Naive thymus-derived CD4-positive, alpha-beta T cell (primary cell): ENCODE measurements at regions of chr12 and their contacts with region 1.

Region 1: GRCh38 chr12:6723607-6724396 is at the start of gene COPS7A:
- DNase-seq: peak; percentile 77 to 94 (median 90)
- ATAC-seq: peak; percentile 93
- H3K4me3 ChIP-seq: peak within 1 kb of the TSS; percentile 63
- H3K4me3 Mint-ChIP-seq: peak within 1 kb of the TSS; percentile 80 to 97 (median 92)
- H3K27ac ChIP-seq: peak within 1 kb of the TSS; percentile 75
- H3K27ac Mint-ChIP-seq: peak within 1 kb of the TSS; percentile 90 to 98 (median 96)
- H3K4me1 ChIP-seq: peaks cover 10 to 11% of the 10 kb centered on the region in 2 donors
- H3K4me1 Mint-ChIP-seq: peaks cover 24 to 34% (median 27%) of the 10 kb centered on the region in 7 donors
- H3K27me3 ChIP-seq: no peaks in the 10 kb centered on the region
- H3K27me3 Mint-ChIP-seq: no peaks in the 10 kb centered on the region
- total RNA-seq, gene COPS7A: 21.9 to 38.7 (median 30.1) TPM

Region 2: GRCh38 chr12:6607751-6608591 is 115.8 kb before region 1 on chr12:
- CTCF ChIA-PET with region 1: interaction called, 3 read pairs
- POLR2A ChIA-PET with region 1: interaction called, 6 read pairs
- intact Hi-C with region 1: loop called (anchors 1 kb)
- DNase-seq: peak in 8 of 9 donors; percentile 56 to 81 (median 71)
- ATAC-seq: peak; percentile 49
- H3K4me3 ChIP-seq: no peak overlapping the region
- H3K4me3 Mint-ChIP-seq: no peak overlapping the region
- H3K27ac ChIP-seq: peak overlapping the region; percentile 96
- H3K27ac Mint-ChIP-seq: no peak overlapping the region
- H3K4me1 ChIP-seq: peaks cover 46 to 47% of the 10 kb centered on the region in 2 donors
- H3K4me1 Mint-ChIP-seq: peaks cover 48 to 55% (median 51%) of the 10 kb centered on the region in 7 donors
- H3K27me3 ChIP-seq: no peaks in the 10 kb centered on the region
- H3K27me3 Mint-ChIP-seq: no peaks in the 10 kb centered on the region

Region 3: GRCh38 chr12:6632026-6632983 is 91.5 kb before region 1 on chr12:
- CTCF ChIA-PET with region 1: no interaction called
- POLR2A ChIA-PET with region 1: interaction called, 4 read pairs
- intact Hi-C with region 1: loop called in 1 of 2 experiments (anchors 1 kb)
- DNase-seq: peak in 8 of 9 donors; percentile 43 to 75 (median 66)
- ATAC-seq: peak; percentile 81
- H3K4me3 ChIP-seq: peak overlapping the region; percentile 56
- H3K4me3 Mint-ChIP-seq: peak overlapping the region; percentile 80 to 94 (median 88)
- H3K27ac ChIP-seq: peak overlapping the region; percentile 81
- H3K27ac Mint-ChIP-seq: peak overlapping the region; percentile 94 to 99 (median 97)
- H3K4me1 ChIP-seq: peaks cover 26 to 40% of the 10 kb centered on the region in 2 donors
- H3K4me1 Mint-ChIP-seq: peaks cover 46 to 68% (median 58%) of the 10 kb centered on the region in 7 donors
- H3K27me3 ChIP-seq: no peaks in the 10 kb centered on the region
- H3K27me3 Mint-ChIP-seq: no peaks in the 10 kb centered on the region

Region 4: GRCh38 chr12:6745741-6746525 is 22.1 kb after region 1 on chr12:
- CTCF ChIA-PET with region 1: no interaction called
- POLR2A ChIA-PET with region 1: interaction called, 10 read pairs
- intact Hi-C with region 1: loop called (anchors 1 kb)
- DNase-seq: peak in 7 of 9 donors; percentile 29 to 59 (median 49)
- ATAC-seq: peak; percentile 94
- H3K4me3 ChIP-seq: no peak overlapping the region
- H3K4me3 Mint-ChIP-seq: peak overlapping the region in 7 of 10 donors; percentile 11 to 61 (median 39)
- H3K27ac ChIP-seq: peak overlapping the region; percentile 56
- H3K27ac Mint-ChIP-seq: peak overlapping the region; percentile 76 to 96 (median 89)
- H3K4me1 ChIP-seq: peaks cover 0 to 13% of the 10 kb centered on the region in 2 donors
- H3K4me1 Mint-ChIP-seq: peaks cover 13 to 31% (median 21%) of the 10 kb centered on the region in 7 donors
- H3K27me3 ChIP-seq: no peaks in the 10 kb centered on the region
- H3K27me3 Mint-ChIP-seq: no peaks in the 10 kb centered on the region

Region 5: GRCh38 chr12:6825398-6826124 is 101.8 kb after region 1 on chr12:
- CTCF ChIA-PET with region 1: interaction called, 3 read pairs
- POLR2A ChIA-PET with region 1: interaction called, 13 read pairs
- intact Hi-C with region 1: no loop called
- DNase-seq: peak; percentile 69 to 89 (median 78)
- ATAC-seq: peak; percentile 79
- H3K4me3 ChIP-seq: no peak overlapping the region
- H3K4me3 Mint-ChIP-seq: peak overlapping the region in 7 of 10 donors; percentile 5 to 65 (median 35)
- H3K27ac ChIP-seq: no peak overlapping the region
- H3K27ac Mint-ChIP-seq: peak overlapping the region in 4 of 9 donors; percentile 22 to 84 (median 53)
- H3K4me1 ChIP-seq: peaks cover 4 to 13% of the 10 kb centered on the region in 2 donors
- H3K4me1 Mint-ChIP-seq: peaks cover 27 to 42% (median 39%) of the 10 kb centered on the region in 7 donors
- H3K27me3 ChIP-seq: peaks cover 0 to 12% of the 10 kb centered on the region in 2 donors
- H3K27me3 Mint-ChIP-seq: peaks cover 9 to 63% (median 26%) of the 10 kb centered on the region in 5 donors